K562 (cell line): ENCODE measurements at regions of chr20 and their contacts with region 1.

Region 1: GRCh38 chr20:24917797-24918578 is 31.1 kb upstream of the CST7 start:
- DNase-seq: peak; percentile 62 to 74 (median 69)
- ATAC-seq: peak; percentile 98
- H3K4me3 ChIP-seq: no peak overlapping the region
- H3K27ac ChIP-seq: no peak overlapping the region
- H3K4me1 ChIP-seq: peaks cover 0 to 8% of the 10 kb centered on the region in 2 experiments; a peak in 2 of 5 replicates
- H3K27me3 ChIP-seq: no peaks in the 10 kb centered on the region; a peak in 1 of 5 replicates
- CTCF ChIP-seq: peak; percentile 70 to 79 (median 79)
- EP300 ChIP-seq: no peak
- POLR2A ChIP-seq: no peak
- RAD21 ChIP-seq: peak; percentile 70 to 82

Region 2: GRCh38 chr20:23668477-23668951 is 1249.5 kb before region 1 on chr20:
- CTCF ChIA-PET with region 1: no interaction called
- POLR2A ChIA-PET with region 1: no interaction called
- in situ Hi-C with region 1: loop called (anchors 5 kb)
- intact Hi-C with region 1: no loop called
- DNase-seq: peak; percentile 57 to 69 (median 61)
- ATAC-seq: peak; percentile 96
- H3K4me3 ChIP-seq: no peak overlapping the region
- H3K27ac ChIP-seq: no peak overlapping the region
- H3K4me1 ChIP-seq: no peaks in the 10 kb centered on the region
- H3K27me3 ChIP-seq: no peaks in the 10 kb centered on the region
- CTCF ChIP-seq: peak; percentile 58 to 75 (median 73)
- EP300 ChIP-seq: no peak
- POLR2A ChIP-seq: no peak
- RAD21 ChIP-seq: peak; percentile 55 to 68

Region 3: DNA sequence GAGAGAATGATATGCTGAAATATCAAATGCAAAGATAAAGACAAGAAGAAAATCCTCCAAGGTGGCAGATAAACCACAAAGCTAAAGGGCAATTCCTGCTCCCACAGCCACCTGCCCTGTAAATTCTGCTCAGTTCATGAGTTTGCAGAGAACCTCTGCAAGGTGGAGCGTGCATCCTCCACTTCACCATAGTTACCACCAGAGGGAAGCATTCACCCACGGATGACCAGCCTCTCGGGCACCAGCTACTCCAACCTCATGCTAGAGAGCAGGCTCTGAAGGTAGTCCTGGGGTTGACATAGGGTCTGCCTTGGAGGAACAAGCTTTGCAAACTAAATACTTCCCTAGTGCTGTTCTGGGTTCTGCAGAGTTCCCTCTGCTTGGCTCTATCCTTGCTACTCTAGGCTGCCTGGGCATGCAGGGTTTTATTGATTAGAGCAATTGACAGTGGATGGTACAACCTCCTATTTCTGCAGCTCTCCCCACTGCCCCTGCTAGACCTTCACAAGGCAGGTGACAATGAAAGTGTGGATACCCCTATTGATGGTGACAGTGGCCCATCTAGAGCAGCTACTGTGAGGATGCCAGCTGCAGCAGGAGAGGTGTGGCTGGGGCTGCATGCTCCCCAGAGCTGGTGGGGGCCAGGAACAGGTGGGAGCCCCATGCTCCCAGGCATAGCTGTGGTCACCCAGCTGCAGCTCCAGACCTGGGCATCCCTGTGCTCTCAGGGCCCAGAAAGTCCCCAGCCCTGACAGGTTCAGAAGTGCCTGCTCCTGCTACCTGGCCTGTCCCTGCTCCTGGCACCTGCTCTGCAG is 980.5 kb before region 1 on chr20:
- CTCF ChIA-PET with region 1: no interaction called
- POLR2A ChIA-PET with region 1: no interaction called
- in situ Hi-C with region 1: no loop called
- intact Hi-C with region 1: loop called (anchors 5 kb)
- DNase-seq: peak; percentile 19 to 35 (median 25)
- ATAC-seq: peak; percentile 83
- H3K4me3 ChIP-seq: no peak overlapping the region
- H3K27ac ChIP-seq: no peak overlapping the region
- H3K4me1 ChIP-seq: no peaks in the 10 kb centered on the region
- H3K27me3 ChIP-seq: no peaks in the 10 kb centered on the region
- CTCF ChIP-seq: peak; percentile 58 to 62 (median 60)
- EP300 ChIP-seq: no peak
- POLR2A ChIP-seq: no peak
- RAD21 ChIP-seq: peak in 1 of 2 experiments; percentile 69; a peak in 3 of 4 replicates

Region 4: DNA sequence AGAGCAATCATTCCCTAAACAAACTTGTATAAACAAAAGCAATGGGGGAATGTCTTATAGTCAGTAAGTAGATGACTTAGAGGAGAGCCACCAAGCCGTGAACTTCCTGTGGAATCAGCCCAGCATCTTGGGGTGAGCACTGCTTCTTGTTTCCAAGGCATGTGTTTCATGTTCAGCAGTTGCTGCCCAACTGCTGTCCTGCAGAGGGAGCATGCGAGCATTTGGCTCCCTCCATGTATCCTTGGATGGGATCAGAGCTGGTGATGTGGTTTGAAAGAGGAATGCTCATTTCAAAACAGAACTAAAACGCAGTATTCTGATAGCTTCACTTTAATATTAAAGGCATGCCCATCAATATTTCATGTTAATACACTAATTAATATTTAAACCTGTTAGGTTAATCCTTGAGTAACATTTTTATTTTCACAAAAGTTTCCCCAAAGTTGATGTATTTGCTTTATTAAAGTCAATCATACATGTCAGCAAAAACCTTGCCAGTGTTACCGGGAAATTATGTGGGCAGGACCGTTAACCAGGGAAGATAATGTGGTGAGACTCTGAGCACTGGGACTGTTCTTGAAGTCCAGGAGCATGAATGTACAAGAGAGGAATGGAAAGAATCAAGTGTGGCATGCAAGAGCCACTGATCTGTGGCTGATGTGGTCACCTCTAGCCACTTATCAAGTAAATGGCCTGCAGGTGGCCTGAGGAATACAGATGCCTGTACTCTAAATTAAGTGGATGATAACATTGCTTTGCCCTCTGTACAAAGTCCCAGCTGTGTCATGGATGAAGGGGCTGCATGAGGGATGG is 757.2 kb before region 1 on chr20:
- CTCF ChIA-PET with region 1: interaction called, 4 read pairs
- POLR2A ChIA-PET with region 1: no interaction called
- in situ Hi-C with region 1: loop called (anchors 25 kb)
- intact Hi-C with region 1: loop called (anchors 10 kb)
- DNase-seq: peak; percentile 17 to 31 (median 22)
- ATAC-seq: peak; percentile 63; the same call in 1 of the 3 replicates
- H3K4me3 ChIP-seq: no peak overlapping the region
- H3K27ac ChIP-seq: no peak overlapping the region
- H3K4me1 ChIP-seq: no peaks in the 10 kb centered on the region
- H3K27me3 ChIP-seq: no peaks in the 10 kb centered on the region
- CTCF ChIP-seq: peak; percentile 41 to 60 (median 58)
- EP300 ChIP-seq: no peak
- POLR2A ChIP-seq: no peak
- RAD21 ChIP-seq: peak; percentile 22 to 34; a peak in 2 of 4 replicates

Region 5: GRCh38 chr20:24651171-24651975 is 266.6 kb before region 1 on chr20:
- CTCF ChIA-PET with region 1: no interaction called
- POLR2A ChIA-PET with region 1: no interaction called
- in situ Hi-C with region 1: no loop called
- intact Hi-C with region 1: no loop called
- DNase-seq: no peak
- ATAC-seq: no peak
- H3K4me3 ChIP-seq: no peak overlapping the region
- H3K27ac ChIP-seq: no peak overlapping the region
- H3K4me1 ChIP-seq: no peaks in the 10 kb centered on the region
- H3K27me3 ChIP-seq: no peaks in the 10 kb centered on the region; a peak in 1 of 5 replicates
- CTCF ChIP-seq: no peak
- EP300 ChIP-seq: no peak
- POLR2A ChIP-seq: no peak
- RAD21 ChIP-seq: no peak

Region 6: DNA sequence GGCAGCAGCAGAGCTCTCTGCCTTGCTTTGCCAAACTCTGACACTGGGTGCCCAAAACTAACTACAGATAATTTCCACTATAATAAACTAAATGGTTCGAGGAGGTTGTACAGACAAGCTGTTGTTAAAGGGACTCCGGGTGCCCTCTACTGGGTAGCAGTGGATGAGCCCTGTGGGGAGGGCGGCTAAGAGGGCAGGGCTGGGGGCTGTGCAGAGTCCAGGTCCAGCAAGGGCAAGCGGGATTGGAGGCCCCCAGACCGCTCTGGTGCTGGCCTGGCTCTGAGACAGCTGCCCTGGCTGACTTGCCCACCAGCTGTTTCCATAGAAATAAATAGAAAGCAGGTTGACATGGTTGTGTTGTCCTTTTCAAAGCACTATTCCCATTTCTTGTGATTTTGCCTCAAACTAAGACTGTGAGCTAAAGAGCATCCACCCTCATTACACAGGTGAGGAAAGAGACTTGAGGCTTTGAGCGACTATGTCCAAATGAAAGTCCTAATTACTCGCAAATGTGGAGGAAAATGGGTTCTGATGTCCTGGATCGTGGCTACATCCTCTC is 136.5 kb before region 1 on chr20:
- CTCF ChIA-PET with region 1: no interaction called
- POLR2A ChIA-PET with region 1: no interaction called
- in situ Hi-C with region 1: no loop called
- intact Hi-C with region 1: loop called (anchors 10 kb)
- DNase-seq: peak in 2 of 4 experiments; percentile 18 to 21
- ATAC-seq: peak; percentile 81
- H3K4me3 ChIP-seq: no peak overlapping the region
- H3K27ac ChIP-seq: no peak overlapping the region
- H3K4me1 ChIP-seq: no peaks in the 10 kb centered on the region
- H3K27me3 ChIP-seq: no peaks in the 10 kb centered on the region
- CTCF ChIP-seq: peak in 2 of 3 experiments; percentile 29 to 38; a peak in 4 of 6 replicates
- EP300 ChIP-seq: no peak
- POLR2A ChIP-seq: no peak
- RAD21 ChIP-seq: peak in 1 of 2 experiments; percentile 31; a peak in 1 of 4 replicates